ENCODE measurements at regions of chr13 and their contacts with region 1.

Region 1: GRCh38 chr13:99356158-99357091 is 49.2 kb upstream of the GPR183 start:
- DNase-seq: peak in 8 of 9 experiments; percentile 41 to 95 (median 66)
- ATAC-seq: peak; percentile 49
- H3K4me3 ChIP-seq: peak overlapping the region in 1 of 2 experiments; percentile 24
- H3K4me3 Mint-ChIP-seq: peak overlapping the region; percentile 55
- H3K27ac ChIP-seq: peak overlapping the region; percentile 81 to 97
- H3K27ac Mint-ChIP-seq: peak overlapping the region; percentile 99
- H3K4me1 ChIP-seq: peaks cover 98% of the 10 kb centered on the region
- H3K4me1 Mint-ChIP-seq: peaks cover 97% of the 10 kb centered on the region
- H3K27me3 ChIP-seq: no peaks in the 10 kb centered on the region
- H3K27me3 Mint-ChIP-seq: no peaks in the 10 kb centered on the region
- CTCF ChIP-seq: no peak

Region 2: GRCh38 chr13:98466634-98467236 is 889.7 kb before region 1 on chr13:
- CTCF ChIA-PET with region 1: no interaction called
- POLR2A ChIA-PET with region 1: no interaction called
- intact Hi-C with region 1: no loop called
- DNase-seq: peak in 5 of 9 experiments; percentile 31 to 47 (median 41)
- ATAC-seq: peak; percentile 66
- H3K4me3 ChIP-seq: no peak overlapping the region
- H3K4me3 Mint-ChIP-seq: no peak overlapping the region
- H3K27ac ChIP-seq: no peak overlapping the region
- H3K27ac Mint-ChIP-seq: peak overlapping the region; percentile 14
- H3K4me1 ChIP-seq: no peaks in the 10 kb centered on the region
- H3K4me1 Mint-ChIP-seq: peaks cover 12% of the 10 kb centered on the region
- H3K27me3 ChIP-seq: no peaks in the 10 kb centered on the region
- H3K27me3 Mint-ChIP-seq: no peaks in the 10 kb centered on the region
- CTCF ChIP-seq: no peak

Region 3: GRCh38 chr13:99281811-99282263 is 74.6 kb before region 1 on chr13:
- CTCF ChIA-PET with region 1: interaction called, 8 read pairs
- POLR2A ChIA-PET with region 1: interaction called, 4 read pairs
- intact Hi-C with region 1: loop called in 1 of 2 experiments (anchors 2 kb)
- DNase-seq: peak in 6 of 9 experiments; percentile 59 to 81 (median 71)
- ATAC-seq: peak; percentile 65
- H3K4me3 ChIP-seq: no peak overlapping the region
- H3K4me3 Mint-ChIP-seq: peak overlapping the region; percentile 38
- H3K27ac ChIP-seq: peak overlapping the region; percentile 53 to 73
- H3K27ac Mint-ChIP-seq: peak overlapping the region; percentile 95
- H3K4me1 ChIP-seq: peaks cover 92% of the 10 kb centered on the region
- H3K4me1 Mint-ChIP-seq: peaks cover 90% of the 10 kb centered on the region
- H3K27me3 ChIP-seq: no peaks in the 10 kb centered on the region
- H3K27me3 Mint-ChIP-seq: no peaks in the 10 kb centered on the region
- CTCF ChIP-seq: no peak

Region 4: GRCh38 chr13:99307648-99308339 is 48.6 kb before region 1 on chr13:
- CTCF ChIA-PET with region 1: interaction called, 10 read pairs
- POLR2A ChIA-PET with region 1: interaction called, 7 read pairs
- intact Hi-C with region 1: loop called (anchors 2 to 5 kb)
- DNase-seq: peak in 5 of 9 experiments; percentile 38 to 63 (median 50)
- ATAC-seq: peak; percentile 57
- H3K4me3 ChIP-seq: peak overlapping the region in 1 of 2 experiments; percentile 53
- H3K4me3 Mint-ChIP-seq: peak overlapping the region; percentile 93
- H3K27ac ChIP-seq: peak overlapping the region; percentile 13 to 65
- H3K27ac Mint-ChIP-seq: peak overlapping the region; percentile 89
- H3K4me1 ChIP-seq: peaks cover 67% of the 10 kb centered on the region
- H3K4me1 Mint-ChIP-seq: peaks cover 81% of the 10 kb centered on the region
- H3K27me3 ChIP-seq: no peaks in the 10 kb centered on the region
- H3K27me3 Mint-ChIP-seq: no peaks in the 10 kb centered on the region
- CTCF ChIP-seq: no peak

Region 5: DNA sequence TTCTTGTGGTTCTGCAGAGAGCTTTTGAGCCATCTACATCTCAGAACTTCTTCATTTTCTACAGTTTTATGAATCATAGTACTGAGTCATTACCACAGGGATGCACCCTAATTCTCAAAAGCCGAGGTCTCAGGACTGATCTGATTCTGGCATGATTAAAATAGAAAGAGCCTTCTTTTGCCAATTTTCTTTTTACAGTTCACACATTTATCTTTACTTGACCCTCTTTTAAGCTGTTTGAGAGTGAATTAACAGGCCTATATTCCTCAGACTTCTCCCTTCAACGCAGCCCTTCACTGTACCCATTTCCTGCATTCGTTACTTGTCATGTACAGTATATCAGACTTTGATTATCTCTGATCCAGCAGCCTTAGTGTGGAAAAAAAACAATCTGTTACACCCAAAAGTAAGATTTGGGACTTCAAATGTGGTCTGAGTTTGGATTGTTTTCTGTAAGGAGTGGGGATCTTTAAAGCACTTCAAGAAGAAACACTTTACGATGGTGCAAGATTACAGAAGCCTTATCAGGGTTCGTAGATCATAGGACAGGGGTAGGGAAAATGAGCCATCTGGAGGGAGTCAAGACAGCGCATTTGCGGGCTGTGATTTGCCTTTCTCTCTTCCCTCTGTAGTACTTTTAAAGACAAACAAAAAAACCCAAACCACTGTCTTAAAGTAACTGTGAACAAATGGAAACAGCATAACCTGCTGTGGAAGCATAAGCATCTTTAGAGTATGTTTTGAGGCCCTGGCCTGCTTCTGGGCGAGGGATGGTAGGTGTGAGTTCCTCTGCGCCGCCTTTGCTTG is 33.9 kb before region 1 on chr13:
- CTCF ChIA-PET with region 1: interaction called, 5 read pairs
- POLR2A ChIA-PET with region 1: interaction called, 4 read pairs
- intact Hi-C with region 1: loop called in 1 of 2 experiments (anchors 1 kb)
- DNase-seq: peak in 5 of 9 experiments; percentile 40 to 81 (median 46)
- ATAC-seq: peak; percentile 80
- H3K4me3 ChIP-seq: peak overlapping the region in 1 of 2 experiments; percentile 6
- H3K4me3 Mint-ChIP-seq: peak overlapping the region; percentile 57
- H3K27ac ChIP-seq: peak overlapping the region; percentile 22 to 56
- H3K27ac Mint-ChIP-seq: peak overlapping the region; percentile 92
- H3K4me1 ChIP-seq: peaks cover 56% of the 10 kb centered on the region
- H3K4me1 Mint-ChIP-seq: peaks cover 73% of the 10 kb centered on the region
- H3K27me3 ChIP-seq: no peaks in the 10 kb centered on the region
- H3K27me3 Mint-ChIP-seq: no peaks in the 10 kb centered on the region
- CTCF ChIP-seq: no peak

Region 6: DNA sequence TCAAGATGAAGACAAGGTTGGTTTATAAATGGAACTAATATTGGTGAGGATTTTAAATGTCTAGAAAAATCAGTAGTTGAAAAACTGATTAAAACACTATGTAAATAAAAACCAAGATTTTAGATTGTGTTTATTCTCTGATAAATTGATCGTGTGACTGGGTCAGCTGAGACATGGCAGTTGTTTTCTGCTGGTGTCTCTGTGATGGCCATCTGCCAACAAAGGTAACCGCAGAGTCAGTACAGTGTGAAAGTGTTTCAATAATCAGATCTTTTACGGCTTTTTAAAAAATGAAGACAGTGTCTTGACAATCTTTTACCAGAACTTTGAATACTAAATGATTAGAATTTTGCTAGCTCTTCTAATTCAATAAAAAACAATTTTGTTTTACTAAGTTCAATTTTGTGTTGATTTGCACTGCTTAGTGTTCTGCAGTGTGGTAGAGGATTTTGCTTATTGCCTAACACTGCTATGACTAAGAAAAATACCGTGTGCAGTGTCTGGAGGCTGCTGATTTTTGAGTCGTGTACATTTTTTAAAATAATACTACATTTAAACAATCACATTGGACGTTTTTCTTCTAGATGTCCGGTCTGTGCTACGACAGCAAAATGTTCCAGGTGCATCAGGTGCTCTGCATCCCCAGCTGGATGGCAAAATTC is 16.6 kb before region 1 on chr13:
- CTCF ChIA-PET with region 1: interaction called, 3 read pairs
- POLR2A ChIA-PET with region 1: interaction called, 10 read pairs
- intact Hi-C with region 1: loop called in 1 of 2 experiments (anchors 1 kb)
- DNase-seq: peak in 6 of 9 experiments; percentile 55 to 85 (median 70)
- ATAC-seq: peak; percentile 72
- H3K4me3 ChIP-seq: peak overlapping the region in 1 of 2 experiments; percentile 14
- H3K4me3 Mint-ChIP-seq: peak overlapping the region; percentile 63
- H3K27ac ChIP-seq: peak overlapping the region; percentile 16 to 26
- H3K27ac Mint-ChIP-seq: peak overlapping the region; percentile 85
- H3K4me1 ChIP-seq: peaks cover 37% of the 10 kb centered on the region
- H3K4me1 Mint-ChIP-seq: peaks cover 77% of the 10 kb centered on the region
- H3K27me3 ChIP-seq: no peaks in the 10 kb centered on the region
- H3K27me3 Mint-ChIP-seq: no peaks in the 10 kb centered on the region
- CTCF ChIP-seq: no peak

Region 7: DNA sequence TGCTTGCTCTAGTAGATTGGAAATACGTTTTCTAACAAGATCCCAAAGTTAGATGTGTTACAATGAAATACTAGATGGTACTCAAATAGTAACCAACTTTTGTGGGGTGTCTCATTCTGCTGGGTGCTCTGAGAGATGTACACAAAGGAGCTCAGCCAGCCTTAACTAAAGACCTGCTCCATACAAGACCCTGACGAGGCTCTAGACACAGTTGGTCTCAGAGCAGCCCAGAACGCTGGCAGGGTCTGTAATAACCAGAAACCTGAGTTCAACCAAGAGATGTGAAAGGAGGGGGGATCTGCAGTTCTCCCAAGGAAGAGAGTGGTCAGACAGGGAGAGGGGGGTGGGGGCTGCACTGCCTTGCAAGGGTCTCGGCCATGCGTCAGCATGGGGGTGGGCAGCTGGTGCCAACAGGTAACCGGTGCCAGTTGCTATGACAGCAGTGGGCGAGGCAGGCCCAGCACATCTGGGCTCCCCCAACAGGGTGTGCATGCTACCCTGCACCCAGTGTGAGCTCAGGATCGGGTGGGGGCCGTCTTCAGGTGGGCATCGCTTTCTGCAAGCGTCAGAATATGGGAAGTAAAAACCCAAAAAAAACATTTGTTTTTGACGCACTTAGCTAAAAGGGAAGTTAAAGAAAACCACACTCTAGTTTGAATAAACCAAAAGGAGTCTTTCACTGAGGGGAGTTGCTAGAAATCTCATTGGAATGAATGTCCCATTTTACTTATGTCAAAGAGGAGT is 18.7 kb after region 1 on chr13:
- CTCF ChIA-PET with region 1: interaction called, 105 read pairs
- POLR2A ChIA-PET with region 1: interaction called, 51 read pairs
- intact Hi-C with region 1: loop called in 1 of 2 experiments (anchors 2 kb)
- DNase-seq: peak in 8 of 9 experiments; percentile 60 to 91 (median 80)
- ATAC-seq: peak; percentile 89
- H3K4me3 ChIP-seq: peak overlapping the region in 1 of 2 experiments; percentile 18
- H3K4me3 Mint-ChIP-seq: peak overlapping the region; percentile 61
- H3K27ac ChIP-seq: peak overlapping the region; percentile 55 to 85
- H3K27ac Mint-ChIP-seq: peak overlapping the region; percentile 97
- H3K4me1 ChIP-seq: peaks cover 75% of the 10 kb centered on the region
- H3K4me1 Mint-ChIP-seq: peaks cover 92% of the 10 kb centered on the region
- H3K27me3 ChIP-seq: no peaks in the 10 kb centered on the region
- H3K27me3 Mint-ChIP-seq: no peaks in the 10 kb centered on the region
- CTCF ChIP-seq: no peak

Region 8: GRCh38 chr13:99380921-99381645 is 24.7 kb after region 1 on chr13:
- CTCF ChIA-PET with region 1: interaction called, 105 read pairs
- POLR2A ChIA-PET with region 1: interaction called, 51 read pairs
- intact Hi-C with region 1: loop called (anchors 1 to 2 kb)
- DNase-seq: peak in 7 of 9 experiments; percentile 41 to 84 (median 75)
- ATAC-seq: peak; percentile 50
- H3K4me3 ChIP-seq: no peak overlapping the region
- H3K4me3 Mint-ChIP-seq: peak overlapping the region; percentile 53
- H3K27ac ChIP-seq: peak overlapping the region; percentile 42 to 72
- H3K27ac Mint-ChIP-seq: peak overlapping the region; percentile 98
- H3K4me1 ChIP-seq: peaks cover 79% of the 10 kb centered on the region
- H3K4me1 Mint-ChIP-seq: peaks cover 93% of the 10 kb centered on the region
- H3K27me3 ChIP-seq: no peaks in the 10 kb centered on the region
- H3K27me3 Mint-ChIP-seq: no peaks in the 10 kb centered on the region
- CTCF ChIP-seq: no peak